ENCODE measurements at regions of chr3 and their contacts with region 1.

Region 1: DNA sequence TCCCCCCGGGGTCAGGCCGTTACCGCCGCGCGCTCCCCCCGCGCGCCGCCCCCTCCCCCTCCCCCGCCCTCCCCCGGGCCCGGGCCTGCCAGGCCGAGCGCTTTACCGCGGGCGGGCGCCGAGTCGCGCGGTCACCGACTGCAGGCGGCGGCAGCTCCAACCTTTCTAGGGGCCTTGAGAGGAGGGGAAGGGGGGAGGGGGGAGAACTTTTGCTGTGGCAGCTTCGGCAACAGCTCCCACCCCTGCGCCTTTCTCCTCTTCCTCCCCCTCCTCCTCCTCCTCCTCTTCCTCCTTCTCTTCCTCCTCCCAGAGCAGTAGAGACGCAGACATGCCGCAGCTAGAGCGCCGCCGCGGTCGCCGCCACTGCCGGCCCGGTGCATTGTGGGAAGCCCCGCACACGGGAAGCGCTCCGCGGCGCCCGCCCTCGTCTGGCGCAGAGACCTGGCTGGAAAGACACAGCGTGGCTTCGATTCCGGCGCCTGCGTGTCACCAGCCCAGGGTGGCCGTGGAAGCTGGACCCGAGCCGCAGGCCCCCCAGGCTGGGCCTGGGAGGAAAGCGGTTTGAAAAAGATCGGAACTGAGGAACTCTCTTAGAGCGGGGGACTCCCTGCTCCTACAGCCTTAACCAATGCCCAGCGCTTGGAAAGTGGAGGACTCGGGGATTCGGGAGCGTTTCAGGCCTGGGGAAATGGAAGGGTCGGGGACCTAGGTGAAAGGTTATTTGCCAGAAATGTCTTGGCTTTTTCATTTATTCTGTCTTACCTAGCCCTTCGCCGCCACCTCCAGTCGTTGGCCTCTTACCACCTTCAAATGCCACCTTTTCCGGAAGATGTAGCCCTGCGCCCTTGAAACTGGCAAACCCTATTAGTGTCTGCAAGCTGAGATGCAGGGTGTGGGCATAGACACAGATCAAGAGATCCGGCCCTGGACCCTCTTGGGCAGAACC is at the start of gene ZNF148:
- DNase-seq: peak; percentile 93
- ATAC-seq: peak; percentile 89
- H3K4me3 Mint-ChIP-seq: peak within 1 kb of the TSS; percentile 96
- H3K27ac Mint-ChIP-seq: peak within 1 kb of the TSS; percentile 97
- H3K4me1 Mint-ChIP-seq: peaks cover 29% of the 10 kb centered on the region
- H3K27me3 Mint-ChIP-seq: no peaks in the 10 kb centered on the region
- total RNA-seq, gene ZNF148: 50.3 to 55.4 TPM

Region 2: GRCh38 chr3:124951511-124952281 is 423.6 kb before region 1 on chr3:
- POLR2A ChIA-PET with region 1: no interaction called
- DNase-seq: no peak
- ATAC-seq: no peak
- H3K4me3 Mint-ChIP-seq: no peak overlapping the region
- H3K27ac Mint-ChIP-seq: no peak overlapping the region
- H3K4me1 Mint-ChIP-seq: no peaks in the 10 kb centered on the region
- H3K27me3 Mint-ChIP-seq: peaks cover 30% of the 10 kb centered on the region

Region 3: GRCh38 chr3:125334675-125335560 is 40.4 kb before region 1 on chr3:
- POLR2A ChIA-PET with region 1: no interaction called
- DNase-seq: no peak
- ATAC-seq: no peak
- H3K4me3 Mint-ChIP-seq: no peak overlapping the region
- H3K27ac Mint-ChIP-seq: no peak overlapping the region
- H3K4me1 Mint-ChIP-seq: peaks cover 11% of the 10 kb centered on the region
- H3K27me3 Mint-ChIP-seq: no peaks in the 10 kb centered on the region

Region 4: DNA sequence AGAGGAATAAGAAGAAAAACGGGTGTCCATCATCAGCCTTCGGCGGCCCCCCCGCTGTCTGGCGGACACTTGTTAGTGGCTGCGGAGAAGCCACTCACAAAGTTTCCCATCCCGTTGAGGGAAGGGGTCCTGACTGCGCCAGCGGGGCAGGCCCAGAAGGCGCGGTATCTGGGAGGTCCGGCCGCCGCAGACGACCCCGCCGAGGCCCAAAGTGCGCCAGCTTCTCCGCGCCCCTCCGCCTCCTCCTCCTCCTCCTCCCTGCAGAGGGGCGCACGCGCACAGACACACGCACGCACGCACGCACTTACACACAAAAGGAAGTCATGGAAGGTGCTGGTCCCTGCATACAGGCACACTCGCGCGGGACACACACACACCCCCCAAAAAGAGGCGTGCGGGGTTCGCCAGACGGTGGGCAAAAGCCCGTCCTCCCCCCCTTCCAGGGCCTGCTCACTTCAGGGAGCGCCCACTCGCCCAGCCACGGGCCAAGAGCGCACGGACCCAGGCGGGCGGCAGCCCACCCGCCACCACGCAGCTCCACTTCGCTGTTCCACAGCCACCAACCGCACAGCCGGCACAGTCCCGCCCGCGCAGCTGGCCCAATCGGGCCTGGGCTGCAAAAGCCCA is 18.1 kb before region 1 on chr3:
- POLR2A ChIA-PET with region 1: interaction called, 13 read pairs
- DNase-seq: peak; percentile 69
- ATAC-seq: peak; percentile 96
- H3K4me3 Mint-ChIP-seq: peak overlapping the region; percentile 90
- H3K27ac Mint-ChIP-seq: peak overlapping the region; percentile 61
- H3K4me1 Mint-ChIP-seq: peaks cover 45% of the 10 kb centered on the region
- H3K27me3 Mint-ChIP-seq: no peaks in the 10 kb centered on the region

Measured in activated naive CD8-positive, alpha-beta T cell treated with anti-CD3 and anti-CD28 coated beads, Interleukin-2, amount 10 ng/mL, durations not matched to agents 7 days and 5 days (primary cell).